Left colon (tissue), 2 donors: ENCODE measurements at regions of chr16 and their contacts with region 1.

Region 1: DNA sequence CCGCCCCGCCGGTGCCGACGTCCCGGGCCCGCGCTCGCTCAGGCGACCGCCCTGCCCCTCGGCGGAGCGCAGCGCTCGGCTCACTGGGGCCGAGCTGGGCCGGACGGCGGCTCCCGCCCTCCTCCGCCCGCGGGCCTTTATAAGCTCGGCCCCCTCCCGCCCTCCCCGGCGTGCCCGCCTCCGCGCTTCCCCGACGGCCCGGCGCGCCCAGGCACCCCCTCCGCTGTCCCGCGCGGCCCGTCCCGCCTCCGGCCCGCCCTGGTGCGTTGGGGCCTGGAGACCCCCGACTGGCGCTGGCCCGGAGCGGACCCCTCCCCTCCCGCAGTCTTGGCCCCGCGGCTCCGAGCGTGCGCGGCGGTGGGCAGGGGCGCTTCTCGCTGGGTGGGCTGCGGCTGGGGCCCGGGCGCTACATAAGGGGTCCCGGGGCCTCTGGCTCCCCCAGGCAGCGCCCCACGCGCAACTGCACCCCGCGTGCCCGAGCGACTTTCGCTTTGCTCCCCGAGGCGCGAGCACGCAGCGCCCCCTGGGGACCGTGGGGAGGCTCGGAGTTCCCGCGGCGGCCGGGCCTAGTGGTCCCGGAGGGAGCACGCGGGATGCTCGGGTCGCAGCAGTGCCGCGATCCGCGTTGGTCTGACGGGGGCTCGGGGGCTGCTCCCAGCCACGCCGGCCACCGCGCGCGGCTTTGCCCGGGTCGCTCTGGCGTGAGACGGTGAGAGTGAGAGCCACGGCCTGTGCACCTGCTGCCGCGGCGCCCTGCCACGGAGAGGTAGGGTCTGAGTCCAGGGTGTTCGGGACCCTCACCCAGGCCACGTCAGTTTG is at the start of gene PIEZO1:
- DNase-seq: peak; percentile 66 to 86
- ATAC-seq: peak; percentile 72
- total RNA-seq, gene PIEZO1: 118 to 146 TPM

Region 2: DNA sequence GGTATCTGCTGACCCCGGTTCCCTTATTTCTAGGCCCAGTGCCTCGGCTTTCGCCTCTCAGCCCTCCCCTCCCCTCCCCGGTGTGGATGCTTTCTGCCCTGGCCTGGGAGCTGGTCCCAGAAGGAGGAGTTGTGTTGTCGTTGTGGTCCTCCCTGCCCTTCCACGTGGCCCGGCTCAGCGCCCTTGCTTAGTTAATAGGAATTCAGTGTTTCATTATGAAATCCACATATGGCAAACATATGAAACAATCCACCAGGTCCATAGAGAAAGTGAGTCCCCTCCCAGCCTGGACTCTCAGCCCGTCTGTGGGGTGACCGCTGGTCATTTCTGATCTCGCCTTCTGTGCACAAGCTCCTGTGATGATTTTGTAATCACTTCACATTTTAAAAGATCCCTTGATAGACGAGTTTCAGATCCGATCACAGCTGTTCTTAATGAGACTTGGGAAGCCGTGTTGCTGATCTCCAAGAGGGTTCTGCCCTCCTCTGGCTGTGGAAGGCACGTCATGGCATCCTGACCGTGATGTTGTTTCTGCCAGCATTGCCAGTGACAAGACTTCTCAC is 722.0 kb before region 1 on chr16:
- intact Hi-C with region 1: no loop called
- DNase-seq: no peak
- ATAC-seq: no peak

Region 3: GRCh38 chr16:88743693-88744576 is 41.4 kb before region 1 on chr16:
- intact Hi-C with region 1: loop called (anchors 5 kb)
- DNase-seq: peak; percentile 77 to 92
- ATAC-seq: peak; percentile 74

Region 4: DNA sequence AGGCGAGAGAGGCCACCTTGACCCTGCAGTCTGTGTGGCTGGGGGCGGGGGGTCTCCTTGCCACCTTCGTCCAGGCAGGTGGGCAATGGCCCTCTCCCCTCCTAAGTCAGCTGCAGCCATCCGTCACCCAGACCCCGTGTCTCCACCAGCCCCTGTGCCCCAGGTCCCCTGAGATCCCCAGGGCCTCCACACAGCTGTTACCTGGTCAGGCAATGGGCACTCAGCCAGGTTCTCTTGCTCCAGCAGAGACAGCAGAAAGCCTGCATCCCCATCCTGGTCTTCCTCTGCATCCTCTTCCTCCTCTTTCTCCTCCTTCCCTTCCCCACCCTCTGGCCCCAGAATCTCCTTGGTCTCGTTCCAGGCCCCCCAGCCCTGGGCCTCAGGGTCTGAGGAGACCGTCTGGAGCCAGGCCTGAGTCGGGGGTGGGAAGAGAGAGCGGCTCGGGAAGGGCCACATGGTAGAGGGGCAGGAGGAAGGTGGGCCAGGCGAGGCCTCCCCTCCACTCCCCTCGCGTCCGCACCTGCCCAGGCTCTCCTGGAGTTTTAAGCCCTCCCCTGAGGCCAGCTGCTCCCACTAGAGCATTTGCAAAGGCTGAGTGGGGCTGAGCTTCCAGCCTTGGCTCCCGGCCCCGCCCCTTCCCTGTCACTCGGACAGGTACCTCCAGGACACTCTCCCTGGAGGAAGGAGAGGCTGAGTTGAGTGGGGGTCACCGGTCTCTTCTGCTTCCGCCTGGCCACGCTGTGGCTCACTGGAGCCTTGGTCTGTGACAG is 81.0 kb after region 1 on chr16 and contains the start of gene PABPN1L:
- intact Hi-C with region 1: no loop called
- DNase-seq: no peak
- ATAC-seq: no peak
- total RNA-seq, gene PABPN1L: not detected